GM10248 (cell line): ENCODE measurements at regions of chr9 and their contacts with region 1.

Region 1: GRCh38 chr9:112334432-112334841 is 1.0 kb upstream of the PTBP3 start:
- DNase-seq: peak; percentile 45
- CTCF ChIP-seq: peak; percentile 6

Region 2: GRCh38 chr9:112348257-112349007 is 14.0 kb after region 1 on chr9:
- CTCF ChIA-PET with region 1: interaction called, 10 read pairs
- POLR2A ChIA-PET with region 1: interaction called, 3 read pairs
- DNase-seq: peak; percentile 24
- CTCF ChIP-seq: no peak

Region 3: GRCh38 chr9:112605518-112605917 is 271.1 kb after region 1 on chr9:
- CTCF ChIA-PET with region 1: no interaction called
- POLR2A ChIA-PET with region 1: no interaction called
- DNase-seq: peak; percentile 54
- CTCF ChIP-seq: no peak